ENCODE measurements at regions of chr6 and their contacts with region 1.

Region 1: DNA sequence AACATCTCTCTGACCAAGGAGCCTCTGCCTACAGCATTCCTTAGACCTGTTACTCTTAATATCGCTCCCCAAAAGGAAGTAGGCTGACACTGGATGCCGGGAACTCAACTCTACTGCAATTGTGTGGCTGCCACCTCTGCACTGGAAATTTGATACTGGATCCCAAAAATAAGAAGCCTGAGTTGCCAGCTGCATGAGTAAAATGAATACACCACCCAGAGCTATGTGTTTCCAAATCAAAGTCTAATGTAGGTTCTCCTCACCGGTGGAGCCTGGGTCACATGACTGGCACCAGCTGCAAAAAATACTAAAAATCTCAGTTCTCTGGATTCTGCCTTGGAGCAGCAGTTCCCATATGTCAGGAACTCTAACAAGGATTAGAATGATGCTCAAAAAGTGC is 36.8 kb downstream of the UNC5CL start:
- DNase-seq: no peak
- H3K4me3 ChIP-seq: no peak overlapping the region
- H3K4me3 Mint-ChIP-seq: no peak overlapping the region
- H3K27ac ChIP-seq: no peak overlapping the region
- H3K27ac Mint-ChIP-seq: no peak overlapping the region
- H3K4me1 ChIP-seq: no peaks in the 10 kb centered on the region
- H3K4me1 Mint-ChIP-seq: no peaks in the 10 kb centered on the region
- H3K27me3 ChIP-seq: no peaks in the 10 kb centered on the region
- H3K27me3 Mint-ChIP-seq: peaks cover 6 to 16% (median 8%) of the 10 kb centered on the region in 3 donors
- CTCF ChIP-seq: no peak

Region 2: DNA sequence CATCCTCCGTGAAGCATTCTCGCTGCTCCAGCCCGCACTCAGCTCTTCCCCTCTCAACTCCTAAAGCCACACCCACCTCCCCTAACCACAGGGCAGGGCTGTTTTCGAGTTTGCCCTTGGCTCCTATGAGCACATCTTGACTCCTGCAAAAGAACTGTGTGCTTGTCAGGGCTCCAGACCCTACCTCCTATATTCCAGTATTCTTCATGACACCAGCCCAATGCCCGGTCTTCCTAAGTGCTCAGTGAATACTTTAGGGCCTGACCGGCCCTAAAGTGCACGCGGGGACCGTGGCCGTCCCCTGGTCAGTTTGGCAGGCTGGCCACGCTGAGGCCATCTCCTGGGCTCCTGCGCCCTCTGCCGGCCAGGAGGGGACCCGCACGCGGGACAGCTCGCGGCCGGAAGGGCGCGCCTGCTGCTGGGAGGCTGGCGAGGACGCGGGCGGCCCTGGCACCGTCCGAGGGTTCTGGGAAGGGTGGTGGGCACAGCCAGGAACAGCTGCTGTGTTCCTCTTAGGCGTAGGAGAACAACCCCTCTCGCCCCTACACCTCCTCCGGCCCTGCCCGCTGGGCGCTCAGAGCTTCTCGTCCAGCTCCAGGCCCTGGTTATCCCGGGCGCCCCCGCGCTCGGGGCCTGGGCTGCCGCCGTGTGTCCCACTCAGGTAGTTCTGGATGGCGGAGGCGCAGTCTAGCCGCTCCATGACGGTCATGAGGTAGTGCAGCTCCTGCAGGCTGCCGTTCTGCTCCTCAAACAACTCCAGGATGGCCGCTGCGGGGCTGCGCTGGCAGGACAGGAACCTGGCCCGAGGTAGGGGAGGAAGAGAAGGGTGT is 25.8 kb after region 1 on chr6:
- intact Hi-C with region 1: loop called in 1 of 2 experiments (anchors 1 kb)
- DNase-seq: peak; percentile 65 to 74 (median 70)
- H3K4me3 ChIP-seq: peak overlapping the region; percentile 30 to 76 (median 49)
- H3K4me3 Mint-ChIP-seq: peak overlapping the region; percentile 79 to 96
- H3K27ac ChIP-seq: peak overlapping the region in 1 of 2 donors; percentile 47
- H3K27ac Mint-ChIP-seq: peak overlapping the region in 5 of 7 donors; percentile 52 to 83 (median 61)
- H3K4me1 ChIP-seq: peaks cover 22 to 27% of the 10 kb centered on the region in 2 donors
- H3K4me1 Mint-ChIP-seq: peaks cover 28% of the 10 kb centered on the region
- H3K27me3 ChIP-seq: no peaks in the 10 kb centered on the region
- H3K27me3 Mint-ChIP-seq: peaks cover 0 to 5% (median 4%) of the 10 kb centered on the region in 3 donors
- CTCF ChIP-seq: peak; percentile 100

Region 3: DNA sequence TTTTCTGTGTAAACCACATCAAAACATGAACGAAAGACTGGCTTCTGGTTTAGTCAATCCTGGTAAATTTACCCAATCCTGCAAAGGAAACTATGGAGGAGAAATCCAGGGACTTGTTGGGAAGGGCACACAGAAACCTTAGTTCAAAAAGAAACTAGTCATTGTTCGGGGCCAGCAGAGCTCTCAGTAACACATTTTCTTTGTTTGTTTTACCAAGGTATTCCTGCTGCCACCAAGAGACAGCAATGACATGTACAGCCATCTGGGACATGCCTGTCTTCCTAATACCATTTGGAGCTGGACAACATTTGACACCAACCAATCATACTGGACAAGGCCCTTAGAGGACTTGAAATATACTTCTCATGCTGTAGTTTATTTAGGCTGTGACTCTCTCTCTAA is 61.7 kb after region 1 on chr6:
- intact Hi-C with region 1: loop called in 1 of 2 experiments (anchors 2 kb)
- DNase-seq: no peak
- H3K4me3 ChIP-seq: no peak overlapping the region
- H3K4me3 Mint-ChIP-seq: no peak overlapping the region
- H3K27ac ChIP-seq: no peak overlapping the region
- H3K27ac Mint-ChIP-seq: no peak overlapping the region
- H3K4me1 ChIP-seq: no peaks in the 10 kb centered on the region
- H3K4me1 Mint-ChIP-seq: peaks cover 2% of the 10 kb centered on the region
- H3K27me3 ChIP-seq: no peaks in the 10 kb centered on the region
- H3K27me3 Mint-ChIP-seq: no peaks in the 10 kb centered on the region
- CTCF ChIP-seq: no peak